Heart right ventricle (tissue), 16 donors: ENCODE measurements at regions of chr7 and their contacts with region 1.

Region 1: DNA sequence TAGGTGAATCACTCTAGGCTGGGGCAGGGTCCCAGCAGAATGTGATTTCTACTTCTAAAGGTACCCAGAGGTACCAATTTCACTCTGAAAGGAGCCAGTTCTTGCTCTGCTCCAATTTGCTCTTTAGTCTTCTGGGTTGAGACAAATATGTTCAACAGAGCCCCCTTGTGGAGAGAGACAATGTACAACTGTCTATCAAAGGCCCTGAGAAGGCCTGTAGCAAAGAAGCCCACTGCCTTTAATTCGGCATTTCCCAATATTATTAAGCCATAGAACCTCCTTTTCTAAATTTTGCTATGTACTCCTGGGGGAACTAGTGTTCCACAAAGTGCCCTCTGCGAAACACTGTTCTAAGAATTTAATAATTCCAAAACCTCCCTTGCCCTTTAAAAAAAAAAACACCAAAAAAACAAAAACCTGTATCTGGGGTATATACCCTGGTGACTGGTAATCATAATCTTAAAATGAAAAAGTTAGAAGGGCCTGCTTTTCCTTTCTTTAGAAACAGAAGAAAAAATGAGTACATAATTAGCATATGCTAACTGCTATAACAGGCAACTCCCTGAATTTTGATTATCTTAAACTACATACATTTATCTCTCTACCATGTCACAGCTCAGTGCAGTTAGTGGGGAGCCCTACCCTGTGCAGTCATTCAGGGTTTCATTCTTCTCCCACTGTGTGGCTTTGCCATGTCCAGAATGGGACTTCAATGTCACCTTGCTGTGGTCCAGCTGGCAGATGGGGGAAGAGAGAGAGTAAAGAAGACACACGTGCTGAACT is 160.9 kb upstream of the BMPER start:
- DNase-seq: no peak
- ATAC-seq: no peak
- H3K4me3 ChIP-seq: no peak overlapping the region
- H3K27ac ChIP-seq: no peak overlapping the region
- H3K4me1 ChIP-seq: peaks cover 0 to 11% (median 0%) of the 10 kb centered on the region in 9 donors
- H3K27me3 ChIP-seq: no peaks in the 10 kb centered on the region
- CTCF ChIP-seq: peak in 8 of 9 donors; percentile 7 to 58 (median 38)

Region 2: GRCh38 chr7:33243319-33243881 is 501.1 kb before region 1 on chr7:
- intact Hi-C with region 1: loop called in 3 of 10 experiments (anchors 5 to 10 kb)
- DNase-seq: peak in 1 of 2 donors; percentile 5
- ATAC-seq: peak in 5 of 8 donors; percentile 38 to 70 (median 56)
- H3K4me3 ChIP-seq: no peak overlapping the region
- H3K27ac ChIP-seq: no peak overlapping the region
- H3K4me1 ChIP-seq: no peaks in the 10 kb centered on the region
- H3K27me3 ChIP-seq: no peaks in the 10 kb centered on the region
- CTCF ChIP-seq: peak; percentile 25 to 79 (median 66)

Region 3: DNA sequence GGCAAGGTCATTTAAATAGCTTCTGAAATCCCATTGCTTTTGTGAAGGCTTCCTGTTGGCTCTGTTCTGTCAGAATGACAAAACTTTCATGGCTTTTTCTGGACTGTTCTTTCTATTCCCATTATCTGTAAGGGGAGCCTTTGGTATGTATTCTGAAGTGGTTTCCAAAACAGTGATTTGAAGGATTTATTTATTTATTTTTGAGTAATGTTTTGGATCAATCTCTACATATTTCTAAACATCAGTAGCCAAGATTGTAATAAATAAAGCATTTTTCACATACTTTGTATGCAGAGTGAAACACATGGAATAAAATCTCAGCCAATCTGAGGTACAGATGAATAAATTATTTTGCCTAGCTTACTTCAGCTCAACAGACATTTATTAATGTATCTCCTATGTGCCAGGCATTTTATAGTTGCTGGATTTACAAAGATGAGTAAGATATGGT is 494.0 kb before region 1 on chr7:
- intact Hi-C with region 1: loop called in 3 of 10 experiments (anchors 10 kb)
- DNase-seq: no peak
- ATAC-seq: peak in 1 of 8 donors; percentile 41
- H3K4me3 ChIP-seq: no peak overlapping the region
- H3K27ac ChIP-seq: no peak overlapping the region
- H3K4me1 ChIP-seq: peaks cover 0 to 10% (median 0%) of the 10 kb centered on the region in 9 donors
- H3K27me3 ChIP-seq: no peaks in the 10 kb centered on the region
- CTCF ChIP-seq: no peak

Region 4: DNA sequence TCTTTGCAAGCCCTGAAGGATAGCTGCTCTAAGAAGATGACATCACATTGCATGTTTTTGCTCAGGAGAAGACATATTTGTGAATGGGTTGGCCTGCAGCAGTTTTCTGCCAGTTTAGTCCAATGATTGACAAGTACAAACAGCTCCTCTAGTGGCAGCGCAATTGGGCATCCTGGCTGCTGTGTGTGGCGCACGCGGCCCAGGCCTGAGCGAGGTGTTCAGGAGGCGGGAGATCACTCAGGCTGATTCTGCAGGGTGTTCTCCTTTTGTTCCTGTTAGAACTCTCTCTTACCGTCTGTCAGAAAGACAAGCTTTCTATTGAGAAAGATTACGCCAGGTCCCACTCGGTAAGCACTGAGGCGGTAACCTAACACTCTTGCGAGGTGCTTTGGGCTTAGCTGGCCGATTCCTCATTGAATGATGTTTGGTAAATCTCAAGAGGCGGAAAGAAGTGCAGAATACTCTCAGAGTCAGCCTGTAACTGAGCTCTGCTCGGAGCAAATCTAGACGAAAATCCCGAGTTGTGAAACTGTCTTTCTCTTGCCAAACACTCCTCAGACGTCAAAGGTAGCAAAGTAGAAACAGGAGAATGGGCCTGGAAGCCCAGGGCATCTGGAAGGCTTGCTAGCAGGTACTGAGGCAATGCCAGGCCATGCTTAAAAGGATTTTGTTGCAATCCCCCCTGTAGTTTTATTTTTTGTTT is 58.4 kb before region 1 on chr7:
- intact Hi-C with region 1: loop called in 1 of 10 experiments (anchors 10 kb)
- DNase-seq: no peak
- ATAC-seq: no peak
- H3K4me3 ChIP-seq: no peak overlapping the region
- H3K27ac ChIP-seq: no peak overlapping the region
- H3K4me1 ChIP-seq: no peaks in the 10 kb centered on the region
- H3K27me3 ChIP-seq: no peaks in the 10 kb centered on the region
- CTCF ChIP-seq: no peak

Region 5: DNA sequence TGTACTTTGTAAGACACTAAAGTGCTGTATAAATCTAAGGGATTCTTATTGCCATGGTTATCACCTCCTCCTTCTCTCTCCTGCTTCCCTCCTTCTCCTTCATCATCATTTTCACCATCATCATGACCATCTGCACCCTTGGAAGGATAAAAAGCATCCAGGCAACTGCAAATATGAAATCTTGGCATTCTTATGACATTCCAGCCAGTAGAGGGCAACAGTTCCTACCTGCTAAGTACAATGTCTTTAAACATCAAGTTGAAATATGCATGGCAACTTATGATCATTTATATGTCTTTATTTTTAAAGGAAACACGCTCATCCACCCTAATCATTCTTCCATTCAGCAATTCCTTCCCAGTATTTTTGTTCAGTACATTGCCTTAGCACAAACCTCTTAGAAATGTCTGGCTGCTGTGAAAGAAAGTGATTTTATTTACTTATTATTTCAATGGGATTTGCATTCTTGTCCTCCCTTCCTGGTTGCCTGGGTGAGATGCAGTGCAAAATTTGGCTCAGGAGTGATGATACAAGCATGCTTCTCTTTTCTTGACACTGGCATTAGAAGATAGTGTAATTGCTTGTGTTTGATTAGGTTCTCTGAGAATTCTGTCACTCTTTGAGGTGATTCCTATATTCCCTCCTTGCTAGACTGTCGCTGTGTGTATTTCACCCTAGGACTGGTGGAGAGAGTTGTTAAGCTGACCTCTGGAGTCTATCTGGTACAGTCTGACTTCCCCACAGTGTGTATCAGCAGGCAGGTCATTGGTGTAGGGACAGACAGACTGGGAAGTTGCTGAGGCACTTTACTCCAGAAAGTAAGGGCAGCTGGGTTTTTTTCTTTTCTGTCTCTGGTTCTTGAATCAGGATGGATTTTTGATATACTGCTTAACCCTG is 27.7 kb before region 1 on chr7:
- intact Hi-C with region 1: loop called in 1 of 10 experiments (anchors 1 kb)
- DNase-seq: no peak
- ATAC-seq: no peak
- H3K4me3 ChIP-seq: no peak overlapping the region
- H3K27ac ChIP-seq: no peak overlapping the region
- H3K4me1 ChIP-seq: peaks cover 0 to 16% (median 10%) of the 10 kb centered on the region in 9 donors
- H3K27me3 ChIP-seq: peaks cover 0 to 3% (median 0%) of the 10 kb centered on the region in 7 donors
- CTCF ChIP-seq: peak; percentile 45 to 78 (median 66)

Region 6: DNA sequence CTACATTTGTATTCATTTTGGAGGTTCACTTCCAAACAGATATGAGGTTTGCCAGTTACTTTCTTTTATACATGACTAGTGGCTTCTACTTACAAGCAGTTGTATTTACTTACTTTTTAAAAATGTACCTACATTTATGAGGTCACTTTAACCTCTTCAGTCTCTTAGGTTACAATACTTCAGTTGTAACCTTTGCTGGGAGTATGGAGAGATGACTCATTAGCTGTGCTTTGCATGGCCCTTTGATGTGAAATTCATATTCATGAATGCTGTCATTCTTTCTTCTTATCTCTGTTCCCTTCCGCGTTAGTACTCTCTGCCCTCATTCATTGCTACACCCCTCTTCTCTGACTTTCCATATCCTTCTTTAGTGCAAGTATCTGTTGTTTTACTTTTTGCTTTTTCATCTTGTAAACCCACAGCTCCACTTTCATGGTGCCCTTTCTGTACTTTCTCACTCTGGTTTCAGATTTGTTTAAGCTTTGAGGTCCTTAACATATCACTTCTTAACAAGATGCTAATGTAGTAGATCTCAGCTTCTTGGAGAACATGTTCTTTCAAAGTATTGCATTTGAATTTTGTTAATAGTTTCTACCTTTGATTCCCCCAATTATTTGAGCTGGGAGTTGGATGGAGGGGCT is 325.3 kb after region 1 on chr7:
- intact Hi-C with region 1: no loop called
- DNase-seq: no peak
- ATAC-seq: no peak
- H3K4me3 ChIP-seq: no peak overlapping the region
- H3K27ac ChIP-seq: no peak overlapping the region
- H3K4me1 ChIP-seq: no peaks in the 10 kb centered on the region
- H3K27me3 ChIP-seq: no peaks in the 10 kb centered on the region
- CTCF ChIP-seq: no peak